ENCODE measurements at regions of chr17 and their contacts with region 1.

Region 1: DNA sequence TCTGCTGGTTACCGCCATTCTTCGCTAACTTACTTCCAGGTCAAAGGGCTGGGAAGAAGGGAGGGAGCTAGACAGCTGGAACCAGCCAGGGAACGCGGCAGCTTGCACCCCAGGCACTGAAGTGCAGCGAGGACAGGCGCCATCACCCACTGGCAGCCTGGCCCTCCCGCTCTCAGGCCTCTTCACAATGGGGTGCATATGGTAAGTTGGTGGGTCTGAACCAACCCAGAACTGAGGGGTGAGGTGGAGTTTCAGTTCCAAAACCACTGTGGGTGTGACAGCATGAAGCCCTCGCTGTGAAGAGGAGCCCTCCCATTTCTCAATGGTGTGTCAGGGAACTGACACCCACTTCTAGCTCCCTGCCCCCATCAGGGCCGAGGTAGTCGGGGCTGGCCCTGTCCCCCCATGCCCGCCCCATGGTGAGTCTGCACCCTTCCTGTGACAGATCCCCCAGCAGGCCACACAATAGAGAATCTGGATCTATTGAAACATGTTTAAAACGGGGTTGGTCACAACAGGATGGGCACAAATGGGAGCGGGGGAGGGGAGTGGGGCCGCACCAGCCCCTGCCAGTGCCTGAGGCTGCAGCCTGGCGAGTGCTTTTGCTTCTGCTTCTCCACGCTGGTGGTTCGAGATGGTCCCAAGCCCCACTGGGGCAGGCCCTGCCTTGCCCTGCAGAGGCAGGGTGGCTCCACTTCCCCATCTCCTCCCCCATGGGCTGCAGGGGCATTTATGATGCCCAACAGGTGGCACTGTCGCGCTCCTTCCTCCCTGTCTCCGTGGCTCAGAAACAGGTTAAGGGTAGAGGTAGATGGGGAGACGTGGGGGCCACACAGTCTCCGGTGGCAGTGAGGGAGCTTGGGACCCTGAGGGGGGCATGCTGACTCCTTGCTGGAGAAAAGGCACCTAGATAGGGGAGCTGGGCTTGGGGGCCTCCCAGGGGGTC is 2.3 kb downstream of the LIMD2 start:
- DNase-seq: peak; percentile 78
- ATAC-seq: peak; percentile 52
- H3K4me3 Mint-ChIP-seq: peak overlapping the region; percentile 96
- H3K27ac Mint-ChIP-seq: peak overlapping the region; percentile 97
- H3K4me1 Mint-ChIP-seq: peaks cover 70% of the 10 kb centered on the region
- H3K27me3 Mint-ChIP-seq: no peaks in the 10 kb centered on the region
- CTCF ChIP-seq: no peak

Region 2: GRCh38 chr17:63349478-63350000 is 348.1 kb before region 1 on chr17:
- CTCF ChIA-PET with region 1: no interaction called
- POLR2A ChIA-PET with region 1: no interaction called
- intact Hi-C with region 1: no loop called
- DNase-seq: no peak
- ATAC-seq: no peak
- H3K4me3 Mint-ChIP-seq: no peak overlapping the region
- H3K27ac Mint-ChIP-seq: no peak overlapping the region
- H3K4me1 Mint-ChIP-seq: no peaks in the 10 kb centered on the region
- H3K27me3 Mint-ChIP-seq: no peaks in the 10 kb centered on the region
- CTCF ChIP-seq: no peak

Region 3: GRCh38 chr17:63445979-63446691 is 251.5 kb before region 1 on chr17 and contains the start of gene CYB561:
- CTCF ChIA-PET with region 1: no interaction called
- POLR2A ChIA-PET with region 1: interaction called, 14 read pairs
- intact Hi-C with region 1: loop called (anchors 2 kb)
- DNase-seq: peak; percentile 88
- ATAC-seq: peak; percentile 68
- H3K4me3 Mint-ChIP-seq: peak within 1 kb of the TSS; percentile 73
- H3K27ac Mint-ChIP-seq: peak within 1 kb of the TSS; percentile 78
- H3K4me1 Mint-ChIP-seq: peaks cover 17% of the 10 kb centered on the region
- H3K27me3 Mint-ChIP-seq: no peaks in the 10 kb centered on the region
- CTCF ChIP-seq: no peak
- total RNA-seq, gene CYB561: 18.9 and 19.9 TPM in 2 replicates

Region 4: GRCh38 chr17:63621766-63622519 is 75.7 kb before region 1 on chr17 and contains the start of gene MAP3K3:
- CTCF ChIA-PET with region 1: interaction called, 8 read pairs
- POLR2A ChIA-PET with region 1: interaction called, 108 read pairs
- intact Hi-C with region 1: loop called (anchors 1 kb)
- DNase-seq: peak; percentile 85
- ATAC-seq: peak; percentile 89
- H3K4me3 Mint-ChIP-seq: peak within 1 kb of the TSS; percentile 95
- H3K27ac Mint-ChIP-seq: peak within 1 kb of the TSS; percentile 91
- H3K4me1 Mint-ChIP-seq: peaks cover 33% of the 10 kb centered on the region
- H3K27me3 Mint-ChIP-seq: no peaks in the 10 kb centered on the region
- CTCF ChIP-seq: no peak
- total RNA-seq, gene MAP3K3: 32.5 and 32.9 TPM in 2 replicates

Region 5: DNA sequence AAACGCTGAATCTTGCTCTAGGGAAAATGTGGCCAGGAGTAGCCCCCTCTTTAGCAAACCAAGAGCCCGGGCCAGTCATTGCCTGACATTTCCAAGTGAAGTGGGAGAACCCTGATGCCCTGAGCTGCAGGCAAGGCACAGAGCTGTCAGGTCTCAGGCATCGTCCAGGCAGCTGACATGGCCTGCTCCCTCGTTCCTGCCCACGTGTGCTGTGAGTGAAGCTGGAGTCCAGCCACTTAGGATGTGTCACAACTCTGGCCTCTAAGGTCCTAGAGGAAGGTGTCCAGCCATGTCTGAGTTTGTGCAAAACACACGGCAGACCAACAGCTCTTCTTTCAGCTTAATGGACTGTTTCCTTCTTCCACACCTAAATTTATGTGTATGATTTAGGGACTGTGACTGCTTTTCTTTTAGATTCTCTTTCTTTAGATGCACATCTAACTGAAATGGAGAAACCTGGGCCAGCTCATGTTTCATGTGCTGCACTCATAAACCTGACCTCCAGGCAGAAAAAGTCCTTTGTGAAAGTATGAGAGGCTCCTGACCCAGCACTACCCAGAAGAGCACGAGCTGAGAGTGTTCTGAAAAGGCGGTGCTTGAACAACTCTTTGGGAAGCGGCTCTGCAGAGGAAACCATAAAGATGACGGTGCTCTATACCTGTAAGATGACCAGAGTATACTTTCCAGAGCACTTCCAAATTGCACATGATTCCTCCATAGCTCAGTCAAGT is 17.1 kb after region 1 on chr17:
- CTCF ChIA-PET with region 1: interaction called, 42 read pairs
- POLR2A ChIA-PET with region 1: interaction called, 106 read pairs
- intact Hi-C with region 1: loop called (anchors 1 kb)
- DNase-seq: no peak
- ATAC-seq: no peak
- H3K4me3 Mint-ChIP-seq: no peak overlapping the region
- H3K27ac Mint-ChIP-seq: no peak overlapping the region
- H3K4me1 Mint-ChIP-seq: peaks cover 7% of the 10 kb centered on the region
- H3K27me3 Mint-ChIP-seq: no peaks in the 10 kb centered on the region
- CTCF ChIP-seq: no peak

Region 6: GRCh38 chr17:63773381-63774140 is 75.9 kb after region 1 on chr17 and contains the start of gene CCDC47:
- CTCF ChIA-PET with region 1: interaction called, 4 read pairs
- POLR2A ChIA-PET with region 1: interaction called, 247 read pairs
- intact Hi-C with region 1: loop called (anchors 1 kb)
- DNase-seq: peak; percentile 96
- ATAC-seq: peak; percentile 76
- H3K4me3 Mint-ChIP-seq: peak within 1 kb of the TSS; percentile 92
- H3K27ac Mint-ChIP-seq: peak within 1 kb of the TSS; percentile 99
- H3K4me1 Mint-ChIP-seq: peaks cover 59% of the 10 kb centered on the region
- H3K27me3 Mint-ChIP-seq: no peaks in the 10 kb centered on the region
- CTCF ChIP-seq: no peak
- total RNA-seq, gene CCDC47: 41.4 and 47.6 TPM in 2 replicates

Region 7: DNA sequence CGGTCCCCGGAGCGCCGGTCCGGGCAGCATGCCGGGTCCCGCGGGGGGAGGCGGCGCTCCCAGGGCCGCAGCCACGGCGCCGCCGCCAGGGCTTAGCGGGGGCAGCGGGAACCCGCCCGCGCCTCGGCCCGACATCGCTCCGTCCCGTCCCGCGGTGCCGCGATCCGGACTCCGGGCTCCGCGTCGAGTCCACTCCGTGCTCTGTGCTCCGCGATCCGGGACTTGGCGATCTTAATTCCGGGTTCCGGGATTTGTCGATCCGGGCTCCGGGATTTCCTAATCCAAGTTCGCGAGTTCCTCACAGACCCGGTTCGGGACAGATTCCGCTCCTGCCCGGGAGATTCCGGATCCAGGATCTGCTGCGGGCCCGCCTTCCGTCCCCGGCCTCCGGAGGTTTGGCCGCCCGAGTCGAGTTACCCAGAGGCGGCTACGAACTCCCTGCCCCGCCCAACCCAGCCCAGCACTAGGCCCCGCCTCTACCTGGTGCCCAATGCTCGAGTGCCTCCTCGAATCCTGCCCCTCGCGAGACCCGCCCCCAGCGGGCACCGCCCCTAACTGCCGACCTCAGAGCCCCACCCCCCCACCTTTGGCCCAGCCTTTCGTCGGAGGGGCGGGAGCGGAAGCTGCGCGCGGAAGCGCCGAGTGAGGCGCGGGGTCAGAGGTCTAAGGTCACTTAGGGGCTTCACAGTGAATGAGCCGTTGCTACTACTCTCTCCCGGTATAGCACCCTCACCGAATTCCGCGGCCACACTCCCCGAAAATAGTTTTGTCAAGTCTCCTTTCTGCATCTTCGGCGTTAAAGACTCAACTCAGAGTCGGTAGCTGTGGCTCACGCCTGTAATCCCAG is 145.1 kb after region 1 on chr17 and contains the start of gene SMARCD2:
- CTCF ChIA-PET with region 1: no interaction called
- POLR2A ChIA-PET with region 1: interaction called, 21 read pairs
- intact Hi-C with region 1: loop called (anchors 1 kb)
- DNase-seq: peak; percentile 96
- ATAC-seq: peak; percentile 90
- H3K4me3 Mint-ChIP-seq: peak within 1 kb of the TSS; percentile 94
- H3K27ac Mint-ChIP-seq: peak within 1 kb of the TSS; percentile 95
- H3K4me1 Mint-ChIP-seq: peaks cover 49% of the 10 kb centered on the region
- H3K27me3 Mint-ChIP-seq: no peaks in the 10 kb centered on the region
- CTCF ChIP-seq: no peak
- total RNA-seq, gene SMARCD2: 114 and 117 TPM in 2 replicates

Measured in activated B cell treated with CpG ODN at 0.5 μM for 24 hours (primary cell).